Caco-2 (cell line): ENCODE measurements at regions of chr2 and their contacts with region 1.

Region 1: GRCh38 chr2:11344342-11344955 is at the start of gene ROCK2:
- DNase-seq: peak; percentile 94 to 95
- H3K4me3 ChIP-seq: peak within 1 kb of the TSS; percentile 82
- H3K4me3 Mint-ChIP-seq: peak within 1 kb of the TSS; percentile 97
- H3K27ac Mint-ChIP-seq: peak within 1 kb of the TSS; percentile 99
- H3K4me1 ChIP-seq: peaks cover 25% of the 10 kb centered on the region
- H3K4me1 Mint-ChIP-seq: peaks cover 3% of the 10 kb centered on the region
- H3K27me3 ChIP-seq: no peaks in the 10 kb centered on the region
- H3K27me3 Mint-ChIP-seq: no peaks in the 10 kb centered on the region
- CTCF ChIP-seq: no peak
- total RNA-seq, gene ROCK2: 61.6 and 64.4 TPM in 2 replicates

Region 2: GRCh38 chr2:10935953-10936942 is 408.2 kb before region 1 on chr2:
- CTCF ChIA-PET with region 1: no interaction called
- POLR2A ChIA-PET with region 1: no interaction called
- intact Hi-C with region 1: no loop called
- DNase-seq: peak; percentile 55 to 74
- H3K4me3 ChIP-seq: no peak overlapping the region
- H3K4me3 Mint-ChIP-seq: no peak overlapping the region
- H3K27ac Mint-ChIP-seq: no peak overlapping the region
- H3K4me1 ChIP-seq: peaks cover 12% of the 10 kb centered on the region
- H3K4me1 Mint-ChIP-seq: peaks cover 13% of the 10 kb centered on the region
- H3K27me3 ChIP-seq: no peaks in the 10 kb centered on the region; the same call in 1 of the 2 replicates
- H3K27me3 Mint-ChIP-seq: no peaks in the 10 kb centered on the region
- CTCF ChIP-seq: no peak

Region 3: GRCh38 chr2:11234309-11234708 is 110.1 kb before region 1 on chr2:
- CTCF ChIA-PET with region 1: interaction called, 6 read pairs
- POLR2A ChIA-PET with region 1: no interaction called
- intact Hi-C with region 1: loop called (anchors 5 kb)
- DNase-seq: no peak
- H3K4me3 ChIP-seq: no peak overlapping the region
- H3K4me3 Mint-ChIP-seq: no peak overlapping the region
- H3K27ac Mint-ChIP-seq: no peak overlapping the region
- H3K4me1 ChIP-seq: no peaks in the 10 kb centered on the region
- H3K4me1 Mint-ChIP-seq: peaks cover 10% of the 10 kb centered on the region
- H3K27me3 ChIP-seq: no peaks in the 10 kb centered on the region
- H3K27me3 Mint-ChIP-seq: no peaks in the 10 kb centered on the region
- CTCF ChIP-seq: peak; percentile 13 to 21

Region 4: DNA sequence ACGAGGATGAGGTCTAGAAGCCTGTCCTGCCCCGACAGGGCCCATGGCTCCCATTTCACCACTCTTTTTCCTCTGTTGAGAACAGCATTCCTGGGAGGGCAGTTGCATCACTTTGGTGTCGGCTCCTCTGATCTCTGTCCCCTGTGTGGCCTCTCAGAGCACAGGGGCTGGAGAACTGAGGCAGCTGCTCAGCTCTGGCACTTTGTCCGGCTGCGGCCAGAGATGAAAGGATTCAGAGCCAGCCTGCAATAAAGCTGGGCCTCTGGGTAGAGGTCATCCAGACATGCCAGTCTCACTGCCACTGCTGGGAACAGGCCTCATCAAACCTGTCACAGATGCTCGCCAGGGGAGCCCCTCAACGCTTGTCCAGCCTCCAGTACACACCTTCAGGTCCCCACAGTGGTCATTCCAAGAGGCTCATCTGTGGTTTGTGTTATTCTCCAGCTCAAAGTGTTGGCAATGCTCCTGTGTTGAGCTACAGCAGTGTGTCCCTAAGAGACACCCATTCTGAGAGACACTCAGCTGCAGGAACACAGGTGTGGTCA is 13.1 kb after region 1 on chr2:
- CTCF ChIA-PET with region 1: interaction called, 10 read pairs
- POLR2A ChIA-PET with region 1: interaction called, 12 read pairs
- intact Hi-C with region 1: loop called (anchors 1 kb)
- DNase-seq: peak; percentile 90 to 94
- H3K4me3 ChIP-seq: no peak overlapping the region
- H3K4me3 Mint-ChIP-seq: peak overlapping the region; percentile 29
- H3K27ac Mint-ChIP-seq: peak overlapping the region; percentile 93
- H3K4me1 ChIP-seq: peaks cover 48% of the 10 kb centered on the region
- H3K4me1 Mint-ChIP-seq: peaks cover 56% of the 10 kb centered on the region
- H3K27me3 ChIP-seq: no peaks in the 10 kb centered on the region
- H3K27me3 Mint-ChIP-seq: no peaks in the 10 kb centered on the region
- CTCF ChIP-seq: no peak

Region 5: GRCh38 chr2:11411768-11412448 is 67.5 kb after region 1 on chr2:
- CTCF ChIA-PET with region 1: interaction called, 5 read pairs
- POLR2A ChIA-PET with region 1: no interaction called
- intact Hi-C with region 1: loop called (anchors 1 kb)
- DNase-seq: peak; percentile 54 to 64
- H3K4me3 ChIP-seq: no peak overlapping the region
- H3K4me3 Mint-ChIP-seq: no peak overlapping the region
- H3K27ac Mint-ChIP-seq: no peak overlapping the region
- H3K4me1 ChIP-seq: no peaks in the 10 kb centered on the region
- H3K4me1 Mint-ChIP-seq: no peaks in the 10 kb centered on the region
- H3K27me3 ChIP-seq: no peaks in the 10 kb centered on the region
- H3K27me3 Mint-ChIP-seq: no peaks in the 10 kb centered on the region
- CTCF ChIP-seq: peak; percentile 78 to 82